ENCODE measurements at regions of chr19 and their contacts with region 1.

Region 1: DNA sequence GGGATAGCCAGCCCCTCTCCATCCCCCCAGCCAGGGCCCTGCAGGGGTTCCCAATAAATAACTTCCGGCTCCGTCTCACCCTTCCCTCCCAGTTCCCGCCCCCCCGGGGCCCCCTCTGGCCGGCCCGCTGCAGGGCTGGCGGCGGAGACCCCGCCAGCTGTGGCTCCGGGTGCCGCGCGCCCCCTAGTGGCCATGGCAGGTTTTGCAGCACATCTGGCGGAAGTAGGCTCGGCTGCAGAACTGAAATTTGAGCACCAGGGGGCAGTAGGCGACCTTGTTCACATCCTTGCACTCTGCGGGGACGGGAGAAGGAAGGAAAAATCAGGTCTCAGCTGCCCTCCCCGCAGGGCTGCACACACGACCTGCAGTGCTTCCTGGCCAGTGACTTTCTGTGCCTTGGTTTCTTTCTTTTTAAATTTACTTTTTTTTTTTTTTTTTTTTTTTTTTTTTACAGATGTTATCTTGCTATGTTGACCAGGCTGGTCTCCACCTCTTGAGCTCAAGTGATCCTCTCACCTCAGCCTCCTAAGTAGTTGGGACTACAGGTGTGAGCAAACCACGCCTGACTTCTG is 3.6 kb upstream of the MYO1F start:
- H3K4me3 ChIP-seq: no peak overlapping the region
- H3K27ac ChIP-seq: no peak overlapping the region
- H3K4me1 ChIP-seq: no peaks in the 10 kb centered on the region
- CTCF ChIP-seq: peak; percentile 96

Region 2: GRCh38 chr19:8367327-8368001 is 213.3 kb before region 1 on chr19:
- CTCF ChIA-PET with region 1: no interaction called
- POLR2A ChIA-PET with region 1: no interaction called
- H3K4me3 ChIP-seq: peak overlapping the region; percentile 28
- H3K27ac ChIP-seq: no peak overlapping the region
- H3K4me1 ChIP-seq: peaks cover 20% of the 10 kb centered on the region
- CTCF ChIP-seq: no peak

Region 3: GRCh38 chr19:8412783-8413628 is 167.8 kb before region 1 on chr19 and contains the start of gene MARCHF2:
- CTCF ChIA-PET with region 1: interaction called, 19 read pairs
- POLR2A ChIA-PET with region 1: no interaction called
- H3K4me3 ChIP-seq: peak within 1 kb of the TSS; percentile 62
- H3K27ac ChIP-seq: no peak within 1 kb of the TSS; the same call in 1 of the 2 replicates
- H3K4me1 ChIP-seq: peaks cover 2% of the 10 kb centered on the region; the same call in 1 of the 2 replicates
- CTCF ChIP-seq: peak; percentile 42

Region 4: DNA sequence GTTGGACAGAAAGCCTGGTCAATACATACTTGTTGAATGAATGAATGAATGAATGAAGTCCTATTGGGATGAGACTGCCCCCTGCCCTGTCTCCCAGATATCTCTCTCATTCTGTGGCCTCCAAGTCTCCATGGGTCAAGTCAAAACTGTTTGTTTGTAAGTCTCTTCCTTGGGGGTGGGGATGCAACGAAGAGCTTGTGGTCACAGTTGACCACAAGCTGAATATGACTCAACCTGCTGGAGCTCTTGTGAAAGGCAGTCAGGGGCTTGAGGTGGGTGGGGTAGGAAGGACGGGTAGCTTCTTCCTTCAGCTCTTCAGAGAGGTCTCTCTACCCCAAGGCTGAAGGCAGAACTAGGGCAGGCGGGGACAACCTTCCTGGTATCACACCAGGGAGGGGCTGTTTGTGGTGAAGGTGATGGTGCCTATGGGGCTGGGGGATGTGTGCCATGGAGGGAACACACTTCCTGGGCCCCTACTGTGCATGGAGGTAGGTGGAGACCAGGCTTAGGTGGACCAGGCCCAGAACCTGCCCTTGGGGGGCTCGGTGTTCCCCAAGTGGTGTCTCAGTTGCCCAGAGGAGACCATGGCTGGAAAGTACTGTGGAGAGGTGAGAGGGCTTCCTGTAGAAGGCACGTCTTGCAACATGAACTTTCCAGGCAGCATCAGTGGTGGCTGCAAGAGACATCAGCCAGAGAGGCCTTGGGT is 11.6 kb before region 1 on chr19:
- CTCF ChIA-PET with region 1: interaction called, 28 read pairs
- POLR2A ChIA-PET with region 1: no interaction called
- H3K4me3 ChIP-seq: no peak overlapping the region
- H3K27ac ChIP-seq: no peak overlapping the region
- H3K4me1 ChIP-seq: no peaks in the 10 kb centered on the region
- CTCF ChIP-seq: no peak

Region 5: DNA sequence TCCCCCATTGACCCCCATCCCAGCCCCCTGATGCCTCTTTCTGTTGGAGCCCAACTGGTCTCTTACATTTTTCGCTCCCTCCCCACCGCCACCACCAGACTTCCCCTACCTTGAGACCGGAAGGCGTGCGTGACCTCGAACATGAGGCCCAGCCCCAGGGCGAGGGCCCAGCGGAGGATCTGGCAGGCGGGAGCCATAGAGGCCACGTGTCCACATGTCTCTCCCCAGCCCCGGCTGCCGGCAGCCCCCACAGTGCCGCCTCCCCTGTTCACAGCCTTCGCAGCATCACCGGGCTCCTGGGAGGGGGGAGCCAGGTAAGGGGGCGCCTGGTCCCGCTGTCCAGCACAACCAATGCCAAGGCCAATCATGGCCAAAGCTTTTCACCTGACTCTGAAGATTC is 24.7 kb after region 1 on chr19:
- CTCF ChIA-PET with region 1: interaction called, 11 read pairs
- POLR2A ChIA-PET with region 1: no interaction called
- H3K4me3 ChIP-seq: no peak overlapping the region
- H3K27ac ChIP-seq: no peak overlapping the region
- H3K4me1 ChIP-seq: no peaks in the 10 kb centered on the region
- CTCF ChIP-seq: no peak

Region 6: GRCh38 chr19:8641908-8642547 is 61.2 kb after region 1 on chr19:
- CTCF ChIA-PET with region 1: interaction called, 32 read pairs
- POLR2A ChIA-PET with region 1: no interaction called
- H3K4me3 ChIP-seq: no peak overlapping the region
- H3K27ac ChIP-seq: no peak overlapping the region
- H3K4me1 ChIP-seq: no peaks in the 10 kb centered on the region
- CTCF ChIP-seq: no peak

Region 7: GRCh38 chr19:8835877-8836276 is 255.1 kb after region 1 on chr19:
- CTCF ChIA-PET with region 1: no interaction called
- POLR2A ChIA-PET with region 1: no interaction called
- H3K4me3 ChIP-seq: no peak overlapping the region
- H3K27ac ChIP-seq: no peak overlapping the region
- H3K4me1 ChIP-seq: 0 out of 2 replicates have a peak, but pooled peaks cover 4% of the 10 kb centered on the region
- CTCF ChIP-seq: no peak